ENCODE measurements at regions of chr11 and their contacts with region 1.

Region 1: DNA sequence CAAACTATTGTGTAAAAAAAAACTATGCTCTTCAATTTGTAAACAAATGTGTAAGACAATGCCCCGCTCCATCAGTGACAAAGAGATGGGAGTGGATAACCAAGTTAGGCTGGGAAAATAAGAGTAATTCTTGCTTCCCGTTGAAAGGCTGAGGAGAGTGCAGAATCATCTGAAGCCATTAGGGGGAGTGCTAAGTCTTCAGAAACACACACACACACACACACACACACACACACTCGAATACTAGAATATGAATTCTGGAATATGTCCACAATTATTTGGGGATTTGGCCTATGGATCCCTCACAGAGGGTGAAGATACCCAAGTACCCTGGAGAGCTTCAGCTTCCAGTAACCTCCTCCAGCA is 27.8 kb upstream of the ROBO3 start:
- DNase-seq: no peak
- H3K4me3 ChIP-seq: no peak overlapping the region
- H3K27ac ChIP-seq: peak overlapping the region in 1 of 4 donors; percentile 84
- H3K4me1 ChIP-seq: peaks cover 0 to 20% (median 17%) of the 10 kb centered on the region in 4 donors
- H3K27me3 ChIP-seq: peaks cover 24 to 50% (median 39%) of the 10 kb centered on the region in 3 donors
- CTCF ChIP-seq: no peak
- EP300 ChIP-seq: no peak
- POLR2A ChIP-seq: no peak

Region 2: DNA sequence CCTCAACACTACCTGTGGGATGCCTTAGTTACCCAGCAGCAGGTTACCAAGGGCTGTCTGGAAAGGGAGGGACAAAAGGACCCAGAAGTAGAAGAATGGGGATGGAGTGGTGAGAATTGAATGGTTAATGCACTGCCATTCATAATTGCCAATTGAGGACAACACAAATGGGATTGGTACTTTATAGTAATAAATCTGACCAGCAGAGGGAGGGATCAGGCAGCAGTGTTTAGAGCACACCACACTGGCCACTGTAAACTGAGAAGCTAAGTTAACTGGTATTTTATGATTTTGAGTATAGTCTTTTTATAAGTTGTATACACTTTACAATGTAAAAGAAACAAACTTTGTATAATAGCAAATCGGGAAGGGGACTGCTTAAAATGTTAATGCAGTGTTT is 204.1 kb before region 1 on chr11:
- intact Hi-C with region 1: no loop called
- DNase-seq: no peak
- H3K4me3 ChIP-seq: no peak overlapping the region
- H3K27ac ChIP-seq: no peak overlapping the region
- H3K4me1 ChIP-seq: no peaks in the 10 kb centered on the region
- H3K27me3 ChIP-seq: no peaks in the 10 kb centered on the region
- CTCF ChIP-seq: no peak
- EP300 ChIP-seq: no peak
- POLR2A ChIP-seq: no peak

Region 3: DNA sequence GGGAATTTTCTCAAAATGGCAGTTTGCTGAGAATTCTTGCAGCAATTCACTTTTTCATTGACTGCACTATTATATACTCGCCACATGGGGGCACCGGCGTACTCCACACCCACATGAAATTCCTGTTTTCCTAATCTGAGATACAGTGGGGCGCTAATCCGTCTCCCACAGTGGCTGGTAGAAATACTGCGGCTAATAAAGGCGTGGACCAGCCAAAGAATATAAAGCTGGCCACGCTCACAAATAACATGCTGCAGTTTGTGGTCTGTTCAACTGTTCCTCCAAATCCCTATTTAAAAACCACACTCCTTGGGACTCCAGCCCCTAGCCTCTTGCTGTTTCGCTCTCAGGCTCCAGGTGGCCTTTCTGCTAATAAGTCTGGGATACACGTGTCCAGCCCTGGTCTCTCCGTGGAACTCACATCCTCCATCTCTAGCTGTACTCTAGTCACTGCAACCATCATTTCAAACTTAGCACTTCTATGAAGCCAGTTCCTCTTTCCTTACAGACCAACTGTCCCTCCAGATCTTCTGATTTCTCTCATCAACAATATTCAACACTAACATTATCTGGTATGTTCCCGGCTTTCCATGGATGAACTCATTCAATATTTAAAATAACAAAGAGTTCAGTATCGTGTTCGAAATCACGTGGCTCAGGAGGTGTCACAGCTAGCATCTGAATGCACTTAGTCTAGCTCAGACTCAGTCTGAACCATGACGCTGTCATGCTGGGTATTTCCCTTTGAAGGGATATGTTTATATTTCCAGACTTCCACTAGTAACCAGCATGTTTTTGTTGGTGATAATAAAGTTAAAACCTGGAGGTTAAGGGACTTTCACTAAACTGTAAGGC is 192.8 kb before region 1 on chr11:
- intact Hi-C with region 1: loop called (anchors 1 kb)
- DNase-seq: peak; percentile 75
- H3K4me3 ChIP-seq: peak overlapping the region in 2 of 4 donors; percentile 22 to 24
- H3K27ac ChIP-seq: peak overlapping the region in 1 of 4 donors; percentile 16
- H3K4me1 ChIP-seq: peaks cover 0 to 4% (median 0%) of the 10 kb centered on the region in 4 donors
- H3K27me3 ChIP-seq: no peaks in the 10 kb centered on the region
- CTCF ChIP-seq: peak; percentile 61 to 83 (median 68)
- EP300 ChIP-seq: no peak
- POLR2A ChIP-seq: no peak

Region 4: GRCh38 chr11:124758317-124759203 is 78.9 kb before region 1 on chr11:
- intact Hi-C with region 1: loop called (anchors 2 kb)
- DNase-seq: peak; percentile 82
- H3K4me3 ChIP-seq: peak overlapping the region in 3 of 4 donors; percentile 25 to 44 (median 41)
- H3K27ac ChIP-seq: peak overlapping the region; percentile 17 to 76 (median 52)
- H3K4me1 ChIP-seq: peaks cover 0 to 47% (median 44%) of the 10 kb centered on the region in 4 donors
- H3K27me3 ChIP-seq: peaks cover 47 to 96% (median 72%) of the 10 kb centered on the region in 3 donors
- CTCF ChIP-seq: peak; percentile 31 to 75 (median 64)
- EP300 ChIP-seq: no peak
- POLR2A ChIP-seq: no peak

Region 5: DNA sequence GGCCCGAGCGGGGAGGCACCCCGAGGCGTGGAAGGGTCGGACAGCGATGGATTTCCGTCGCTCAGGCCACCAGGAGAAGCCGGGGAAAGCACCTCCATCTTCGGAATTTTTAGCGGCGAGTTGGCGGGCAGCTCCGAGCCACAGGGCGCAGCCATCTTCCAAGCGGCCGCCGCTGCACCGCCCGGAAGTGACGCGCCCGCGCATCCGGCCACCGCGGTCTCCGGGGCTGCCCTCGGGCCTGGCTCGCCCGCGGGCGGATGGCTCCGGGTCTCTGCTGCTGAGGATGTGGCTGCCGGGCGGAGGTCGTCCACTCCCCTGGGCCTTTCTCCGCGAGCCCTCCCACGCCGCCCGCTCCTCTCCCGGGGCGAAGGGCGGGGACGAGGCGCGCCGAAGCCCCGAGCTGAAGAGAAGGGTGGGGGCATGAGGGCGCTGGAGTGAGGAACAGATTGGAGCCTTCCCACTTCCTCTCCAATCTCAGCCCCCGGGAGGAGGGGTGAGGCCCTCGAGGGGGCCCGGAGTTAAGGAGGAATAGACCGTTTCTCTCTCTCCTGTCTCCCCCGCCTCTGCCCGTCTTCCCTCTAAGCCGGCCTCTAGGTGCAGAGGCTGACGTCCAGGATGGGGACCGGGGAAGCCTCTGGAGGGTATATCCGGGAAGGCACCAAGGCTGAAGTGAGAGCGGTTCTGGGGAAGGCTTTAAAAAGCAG is 37.1 kb before region 1 on chr11 and contains the start of gene MSANTD2:
- intact Hi-C with region 1: loop called (anchors 1 kb)
- DNase-seq: peak; percentile 91
- H3K4me3 ChIP-seq: peak within 1 kb of the TSS; percentile 63 to 96 (median 91)
- H3K27ac ChIP-seq: peak within 1 kb of the TSS; percentile 93 to 98 (median 97)
- H3K4me1 ChIP-seq: peaks cover 0 to 32% (median 28%) of the 10 kb centered on the region in 4 donors
- H3K27me3 ChIP-seq: no peaks in the 10 kb centered on the region
- CTCF ChIP-seq: no peak
- EP300 ChIP-seq: no peak
- POLR2A ChIP-seq: peak; percentile 60 to 68
- total RNA-seq, gene MSANTD2: 8.6 to 23.8 (median 16.0) TPM

Region 6: DNA sequence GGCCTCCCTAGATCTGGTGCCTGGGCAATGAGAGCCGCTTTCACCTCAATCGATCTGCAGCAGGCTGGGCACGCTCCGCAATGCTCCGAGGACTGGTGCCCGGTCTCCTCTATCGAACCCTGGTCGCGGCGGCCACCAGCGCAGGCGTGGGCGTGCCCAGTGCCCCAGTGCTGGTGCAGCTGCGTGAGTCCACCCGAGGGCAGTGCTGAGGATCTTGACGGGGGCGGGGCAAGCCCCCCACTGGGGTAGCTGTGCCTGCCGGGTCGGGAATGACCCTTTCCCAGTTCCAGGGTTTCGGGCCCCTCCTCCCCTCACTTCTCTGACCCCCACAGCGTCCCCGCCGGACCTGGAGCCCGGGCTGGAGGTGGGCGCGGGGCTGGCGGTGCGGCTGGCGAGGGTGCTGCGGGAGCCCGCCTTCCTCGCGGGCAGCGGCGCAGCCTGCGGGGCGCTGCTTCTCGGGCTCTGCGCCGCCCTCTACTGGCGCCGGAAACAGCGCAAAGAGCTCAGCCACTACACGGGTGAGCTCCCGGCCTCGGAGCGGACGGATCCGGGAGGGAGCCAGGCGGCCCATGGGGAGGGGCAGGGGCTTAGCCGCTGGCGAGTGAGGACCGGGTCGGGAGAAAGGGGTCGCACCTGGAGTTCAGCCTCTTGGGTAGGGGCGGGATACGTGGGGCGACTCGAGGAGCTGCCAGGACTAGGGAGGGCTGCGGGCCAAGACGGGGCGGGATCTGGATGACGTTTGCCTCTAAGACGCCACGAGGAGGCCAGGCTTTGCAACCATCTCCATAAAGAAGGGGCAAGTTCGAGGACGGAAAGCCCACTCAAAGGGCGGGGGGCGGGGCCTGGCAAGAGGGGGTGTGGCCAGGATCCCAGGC is 38.7 kb after region 1 on chr11:
- intact Hi-C with region 1: loop called (anchors 5 kb)
- DNase-seq: peak; percentile 95
- H3K4me3 ChIP-seq: peak overlapping the region; percentile 47 to 66 (median 54)
- H3K27ac ChIP-seq: peak overlapping the region; percentile 88 to 92 (median 90)
- H3K4me1 ChIP-seq: peaks cover 0 to 21% (median 12%) of the 10 kb centered on the region in 4 donors
- H3K27me3 ChIP-seq: peaks cover 0 to 29% (median 21%) of the 10 kb centered on the region in 3 donors
- CTCF ChIP-seq: peak; percentile 44 to 71 (median 49)
- EP300 ChIP-seq: peak in 1 of 4 donors; percentile 28
- POLR2A ChIP-seq: no peak